Activated T-helper 1 cell treated with anti-CD3 and anti-CD28 coated beads, Interleukin-12 subunit alpha, Interleukin-12 subunit beta, Interleukin-2, Interleukin-4 antibody, amounts not matched to agents 30 ng/mL and 10 ng/mL and 1 ng/mL, durations not matched to agents 14 hours and 24 hours and 36 hours (primary cell): ENCODE measurements at regions of chr3 and their contacts with region 1.

Region 1: DNA sequence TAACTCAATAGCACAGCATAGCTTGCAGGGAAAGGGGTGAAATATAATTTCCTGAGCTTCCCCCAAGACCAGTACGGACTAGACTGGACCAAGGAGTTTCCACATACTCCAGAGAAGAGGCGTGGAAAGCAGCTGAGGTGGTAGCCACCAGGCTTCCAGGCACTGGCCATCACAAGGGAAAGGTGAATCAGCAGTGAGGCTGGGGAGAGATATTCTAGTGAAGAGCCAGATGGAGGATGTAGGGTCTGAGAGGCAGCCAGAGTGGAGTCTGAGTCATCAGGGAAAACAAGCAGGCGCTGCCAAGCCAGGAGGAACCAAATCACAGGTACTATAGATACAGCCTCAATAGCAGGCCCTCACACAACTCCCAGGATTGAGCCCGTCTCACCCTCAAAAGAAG is 9.6 kb upstream of the RASA2 start:
- DNase-seq: no peak
- H3K4me3 Mint-ChIP-seq: no peak overlapping the region
- H3K27ac Mint-ChIP-seq: no peak overlapping the region
- H3K4me1 Mint-ChIP-seq: peaks cover 43% of the 10 kb centered on the region
- H3K27me3 Mint-ChIP-seq: peaks cover 17% of the 10 kb centered on the region

Region 2: DNA sequence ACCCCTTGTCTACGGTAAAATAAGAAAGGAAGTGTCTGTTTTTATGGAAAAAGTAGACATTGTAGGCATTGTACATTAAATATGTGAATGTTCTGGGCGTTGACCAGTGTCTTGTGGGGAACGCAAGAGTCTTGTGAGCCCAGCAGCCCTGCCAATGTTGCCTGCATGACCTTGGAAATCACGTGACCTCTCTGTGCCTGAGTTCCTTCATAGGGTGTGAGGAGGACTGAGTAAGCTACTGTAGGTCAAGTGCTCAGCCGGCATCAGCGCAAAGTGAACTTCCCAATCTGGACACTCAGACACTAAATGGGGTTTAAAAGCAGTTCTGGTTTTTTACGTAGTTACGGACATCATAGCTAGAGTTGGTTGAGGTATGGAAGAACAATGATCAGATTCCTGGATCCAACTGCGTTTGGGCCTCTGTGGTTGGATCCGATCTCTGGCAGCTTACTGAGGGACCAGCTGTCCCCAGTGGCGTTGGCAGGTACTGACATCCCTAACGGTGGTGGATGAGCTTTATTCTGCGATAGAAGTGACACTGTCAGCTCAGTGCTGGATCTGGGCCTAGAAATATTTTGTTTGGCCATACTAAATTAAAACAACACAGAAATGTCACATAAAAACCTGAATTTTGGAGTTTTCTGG is 362.3 kb before region 1 on chr3:
- intact Hi-C with region 1: no loop called
- DNase-seq: no peak
- H3K4me3 Mint-ChIP-seq: no peak overlapping the region
- H3K27ac Mint-ChIP-seq: no peak overlapping the region
- H3K4me1 Mint-ChIP-seq: no peaks in the 10 kb centered on the region
- H3K27me3 Mint-ChIP-seq: peaks cover 3% of the 10 kb centered on the region

Region 3: GRCh38 chr3:141553055-141553454 is 75.8 kb after region 1 on chr3:
- intact Hi-C with region 1: loop called (anchors 1 kb)
- DNase-seq: peak; percentile 35
- H3K4me3 Mint-ChIP-seq: peak overlapping the region; percentile 38
- H3K27ac Mint-ChIP-seq: peak overlapping the region; percentile 93
- H3K4me1 Mint-ChIP-seq: peaks cover 52% of the 10 kb centered on the region
- H3K27me3 Mint-ChIP-seq: no peaks in the 10 kb centered on the region

Region 4: DNA sequence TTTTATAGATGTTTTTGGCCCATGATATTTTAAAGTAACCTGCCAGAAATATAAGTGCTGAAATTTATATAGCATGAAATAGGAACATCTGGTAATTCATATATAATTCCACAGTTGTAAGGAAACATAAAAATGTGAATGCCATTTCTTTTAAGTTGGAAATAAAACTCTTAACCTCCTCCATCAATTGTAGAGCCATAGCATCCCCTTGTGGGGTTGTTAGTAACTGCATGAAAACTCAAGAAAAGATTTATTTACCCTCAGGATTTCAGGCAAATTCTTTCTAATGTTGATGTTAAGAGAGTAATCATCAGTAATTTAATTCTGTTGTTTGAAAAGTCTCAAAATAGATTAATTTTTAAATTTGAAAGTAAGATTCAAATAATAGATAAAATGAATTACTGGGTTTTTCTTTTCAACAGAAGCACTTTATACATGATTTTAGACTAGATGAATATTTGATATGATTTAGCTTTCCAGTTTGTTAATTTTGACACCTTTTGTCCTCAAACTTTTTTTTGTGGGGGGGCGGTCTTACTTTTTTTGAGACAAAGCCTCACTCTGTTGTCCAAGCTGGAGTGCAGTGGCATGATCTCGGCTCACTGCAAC is 84.3 kb after region 1 on chr3:
- intact Hi-C with region 1: loop called (anchors 1 kb)
- DNase-seq: peak; percentile 17
- H3K4me3 Mint-ChIP-seq: no peak overlapping the region
- H3K27ac Mint-ChIP-seq: peak overlapping the region; percentile 61
- H3K4me1 Mint-ChIP-seq: peaks cover 24% of the 10 kb centered on the region
- H3K27me3 Mint-ChIP-seq: no peaks in the 10 kb centered on the region

Region 5: GRCh38 chr3:141754032-141754431 is 276.8 kb after region 1 on chr3:
- intact Hi-C with region 1: no loop called
- DNase-seq: no peak
- H3K4me3 Mint-ChIP-seq: no peak overlapping the region
- H3K27ac Mint-ChIP-seq: no peak overlapping the region
- H3K4me1 Mint-ChIP-seq: no peaks in the 10 kb centered on the region
- H3K27me3 Mint-ChIP-seq: no peaks in the 10 kb centered on the region